Activated CD4-positive, alpha-beta memory T cell treated with anti-CD3 and anti-CD28 coated beads for 36 hours (primary cell): ENCODE measurements at regions of chr20 and their contacts with region 1.

Region 1: GRCh38 chr20:5714261-5715041 is 35.8 kb upstream of the SHLD1 start:
- DNase-seq: peak; percentile 70
- H3K4me3 Mint-ChIP-seq: peak overlapping the region; percentile 21
- H3K27ac Mint-ChIP-seq: peak overlapping the region; percentile 84
- H3K4me1 Mint-ChIP-seq: peaks cover 40% of the 10 kb centered on the region
- H3K27me3 Mint-ChIP-seq: no peaks in the 10 kb centered on the region

Region 2: DNA sequence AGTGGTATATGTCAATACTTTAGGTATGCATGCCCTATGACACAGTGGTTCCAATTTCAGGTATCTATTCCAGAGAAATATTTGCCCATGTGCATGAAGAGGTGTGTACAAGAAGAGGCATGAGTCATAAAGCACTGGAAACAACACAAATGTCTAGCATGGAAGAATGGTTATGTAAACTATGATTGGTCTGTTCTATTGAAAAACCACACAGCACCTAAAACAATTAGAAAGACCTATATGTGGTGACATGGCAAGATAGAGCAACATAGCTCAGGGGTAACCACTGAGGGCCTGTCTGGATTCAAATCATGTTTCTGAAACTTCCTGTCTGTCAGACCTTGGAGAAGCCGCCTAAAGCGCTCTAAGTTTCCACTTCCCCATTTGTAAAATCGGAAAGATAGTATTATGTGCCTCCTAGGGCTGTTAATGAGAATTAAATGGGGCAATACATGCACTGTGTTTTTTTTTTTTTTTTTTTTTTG is 40.2 kb before region 1 on chr20:
- CTCF ChIA-PET with region 1: no interaction called
- POLR2A ChIA-PET with region 1: interaction called, 3 read pairs
- intact Hi-C with region 1: loop called (anchors 1 kb)
- DNase-seq: peak; percentile 49
- H3K4me3 Mint-ChIP-seq: no peak overlapping the region
- H3K27ac Mint-ChIP-seq: peak overlapping the region; percentile 80
- H3K4me1 Mint-ChIP-seq: peaks cover 13% of the 10 kb centered on the region
- H3K27me3 Mint-ChIP-seq: no peaks in the 10 kb centered on the region

Region 3: GRCh38 chr20:5749952-5750779 is 35.7 kb after region 1 on chr20 and contains the start of gene SHLD1:
- CTCF ChIA-PET with region 1: no interaction called
- POLR2A ChIA-PET with region 1: no interaction called
- intact Hi-C with region 1: loop called (anchors 1 kb)
- DNase-seq: peak; percentile 88
- H3K4me3 Mint-ChIP-seq: peak within 1 kb of the TSS; percentile 90
- H3K27ac Mint-ChIP-seq: peak within 1 kb of the TSS; percentile 95
- H3K4me1 Mint-ChIP-seq: peaks cover 18% of the 10 kb centered on the region
- H3K27me3 Mint-ChIP-seq: no peaks in the 10 kb centered on the region
- total RNA-seq, gene SHLD1: 9.0 to 9.8 TPM

Region 4: DNA sequence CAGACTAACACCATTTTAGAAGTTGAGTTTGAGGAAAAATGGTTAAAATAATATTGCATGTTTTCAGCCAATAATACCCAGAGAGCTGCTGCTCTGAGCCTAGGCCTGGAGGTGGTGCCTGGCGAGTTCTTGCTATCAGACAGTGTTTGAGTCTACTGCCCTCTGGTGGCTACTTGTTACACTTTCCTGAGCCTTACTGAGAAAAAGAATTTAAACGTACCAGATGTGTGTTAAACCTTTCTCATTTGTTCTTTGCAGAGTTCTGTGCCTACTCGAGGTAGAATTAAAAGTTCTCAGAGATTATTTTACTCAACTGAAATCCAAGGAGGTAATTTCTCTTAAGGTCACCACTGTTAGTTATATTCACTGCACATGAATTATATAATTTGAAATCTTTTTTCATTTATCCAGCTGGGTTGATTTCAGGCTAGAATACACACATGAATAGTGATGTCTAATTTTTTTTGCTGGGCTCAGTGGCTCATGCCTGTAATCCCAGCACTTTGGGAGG is 74.0 kb after region 1 on chr20:
- CTCF ChIA-PET with region 1: no interaction called
- POLR2A ChIA-PET with region 1: no interaction called
- intact Hi-C with region 1: loop called (anchors 1 kb)
- DNase-seq: peak; percentile 77
- H3K4me3 Mint-ChIP-seq: no peak overlapping the region
- H3K27ac Mint-ChIP-seq: peak overlapping the region; percentile 39
- H3K4me1 Mint-ChIP-seq: peaks cover 13% of the 10 kb centered on the region
- H3K27me3 Mint-ChIP-seq: no peaks in the 10 kb centered on the region